Ascending aorta (tissue), 2 donors: ENCODE measurements at regions of chr2 and their contacts with region 1.

Region 1: DNA sequence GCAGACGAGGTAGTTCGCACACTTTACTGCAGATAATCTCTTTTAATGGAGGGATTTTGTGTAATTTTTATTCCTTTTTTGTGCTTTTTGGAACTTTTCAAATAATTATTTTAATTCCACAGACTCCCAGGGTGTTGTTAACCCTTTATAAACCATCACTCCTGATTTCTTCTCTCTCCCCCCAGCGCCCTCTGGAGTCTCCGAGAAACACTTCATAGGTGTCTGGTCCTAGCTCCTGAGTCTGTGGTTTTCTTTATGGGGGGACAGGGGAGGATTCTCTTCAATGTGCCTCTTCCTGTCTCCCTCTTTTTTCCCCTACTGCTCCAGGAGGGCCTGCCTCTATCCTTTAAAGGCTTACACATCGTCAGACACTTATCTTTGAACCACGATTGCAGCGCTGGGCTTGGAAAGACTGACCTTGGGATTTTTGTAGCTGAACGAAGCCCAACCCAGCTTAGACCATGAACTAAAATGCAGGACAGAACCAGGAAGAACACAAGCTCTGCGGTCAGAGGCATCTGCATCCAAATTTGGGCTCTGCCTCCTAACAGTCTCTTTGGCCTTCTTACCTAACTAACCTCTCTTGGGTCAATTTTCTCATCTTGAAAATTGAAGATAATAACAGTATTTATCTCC is 7.1 kb upstream of the PKDCC start:
- DNase-seq: no peak
- H3K4me3 ChIP-seq: no peak overlapping the region
- H3K27ac ChIP-seq: no peak overlapping the region
- H3K4me1 ChIP-seq: peaks cover 0 to 3% of the 10 kb centered on the region in 2 donors
- H3K27me3 ChIP-seq: no peaks in the 10 kb centered on the region
- CTCF ChIP-seq: no peak

Region 2: DNA sequence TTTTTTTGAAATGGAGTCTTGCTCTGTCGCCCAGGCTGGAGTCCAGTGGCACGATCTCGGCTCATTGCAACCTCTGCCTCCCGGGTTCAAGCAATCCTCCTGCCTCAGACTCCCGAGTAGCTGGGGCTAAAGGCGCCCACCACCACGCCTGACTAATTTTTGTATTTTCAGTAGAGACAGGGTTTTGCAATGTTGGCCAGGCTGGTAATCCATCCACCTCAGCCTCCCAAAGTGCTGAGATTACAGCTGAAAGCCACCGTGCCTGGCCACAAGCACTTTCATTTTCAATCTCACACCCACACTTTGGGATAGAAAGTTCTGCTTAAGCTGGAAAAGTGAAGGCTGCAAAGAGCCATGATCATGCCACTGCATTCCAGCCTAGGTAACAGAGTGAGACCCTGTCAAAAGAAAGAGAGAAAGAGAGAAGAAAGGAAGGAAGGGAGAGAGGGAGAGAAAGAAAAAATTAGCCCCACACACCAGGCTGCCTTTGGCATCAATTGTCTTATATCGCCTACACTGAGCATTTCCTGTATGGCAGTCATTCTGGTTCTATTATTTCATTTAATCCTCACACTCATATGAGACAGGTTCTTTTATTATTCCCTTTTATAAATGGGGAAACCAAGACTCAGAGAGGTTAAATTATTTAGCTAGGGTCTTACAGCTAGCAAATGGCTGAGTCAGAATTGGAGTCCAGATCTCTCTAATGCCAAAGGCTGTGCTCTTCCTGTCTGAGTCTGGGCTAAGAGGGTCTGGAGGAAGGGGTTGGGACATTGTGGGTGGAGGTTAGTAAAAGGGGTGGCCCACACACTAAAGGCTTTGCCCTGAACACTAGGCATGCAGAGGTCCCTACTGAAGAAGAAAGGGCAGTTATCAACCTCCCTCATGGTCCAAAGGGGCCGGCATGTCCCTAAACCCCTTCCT is 30.8 kb before region 1 on chr2:
- intact Hi-C with region 1: loop called (anchors 5 kb)
- DNase-seq: no peak
- H3K4me3 ChIP-seq: peak overlapping the region in 1 of 2 donors; percentile 50
- H3K27ac ChIP-seq: peak overlapping the region in 1 of 2 donors; percentile 5
- H3K4me1 ChIP-seq: peaks cover 0 to 10% of the 10 kb centered on the region in 2 donors
- H3K27me3 ChIP-seq: no peaks in the 10 kb centered on the region
- CTCF ChIP-seq: no peak

Region 3: GRCh38 chr2:42026272-42026671 is 14.5 kb before region 1 on chr2:
- intact Hi-C with region 1: loop called (anchors 2 kb)
- DNase-seq: no peak
- H3K4me3 ChIP-seq: no peak overlapping the region
- H3K27ac ChIP-seq: no peak overlapping the region
- H3K4me1 ChIP-seq: peaks cover 0 to 7% of the 10 kb centered on the region in 2 donors
- H3K27me3 ChIP-seq: no peaks in the 10 kb centered on the region
- CTCF ChIP-seq: no peak